ENCODE measurements at regions of chr2 and their contacts with region 1.

Region 1: DNA sequence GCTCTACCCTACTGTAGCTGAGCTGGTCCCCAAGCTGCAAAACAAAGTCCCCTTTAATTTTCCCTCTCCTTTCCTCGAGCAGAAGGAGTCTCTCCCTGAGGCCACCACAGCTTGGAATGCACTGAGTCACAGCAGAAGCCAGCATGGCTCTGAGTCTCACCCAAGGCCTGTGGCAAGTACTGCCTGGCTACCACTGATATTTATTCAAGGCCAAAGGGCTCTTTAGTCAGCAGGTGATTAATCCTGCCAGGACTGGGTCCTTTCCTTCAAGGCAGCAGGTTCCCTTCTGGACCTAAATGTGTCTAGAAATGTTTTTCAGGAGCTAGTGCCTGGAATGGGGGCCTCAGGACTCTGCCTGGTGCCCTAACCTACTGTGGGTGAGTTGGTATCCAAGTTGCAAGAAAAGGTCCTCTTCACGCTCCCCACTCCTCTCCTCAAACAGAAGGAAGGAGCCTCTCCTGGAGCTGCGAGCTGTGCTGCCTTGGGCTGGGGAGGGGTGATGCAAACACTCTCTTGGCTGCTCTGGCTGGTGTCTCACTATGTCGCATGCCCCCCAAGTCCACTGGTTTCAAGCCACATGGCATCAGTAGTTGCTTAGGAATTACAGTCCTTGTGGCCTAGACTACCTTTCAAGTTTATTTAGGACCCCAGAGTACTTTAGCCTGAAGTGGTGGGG is 53.4 kb downstream of the CD28 start:
- DNase-seq: no peak
- H3K4me3 Mint-ChIP-seq: no peak overlapping the region
- H3K27ac Mint-ChIP-seq: no peak overlapping the region
- H3K4me1 Mint-ChIP-seq: peaks cover 59% of the 10 kb centered on the region
- H3K27me3 Mint-ChIP-seq: no peaks in the 10 kb centered on the region

Region 2: DNA sequence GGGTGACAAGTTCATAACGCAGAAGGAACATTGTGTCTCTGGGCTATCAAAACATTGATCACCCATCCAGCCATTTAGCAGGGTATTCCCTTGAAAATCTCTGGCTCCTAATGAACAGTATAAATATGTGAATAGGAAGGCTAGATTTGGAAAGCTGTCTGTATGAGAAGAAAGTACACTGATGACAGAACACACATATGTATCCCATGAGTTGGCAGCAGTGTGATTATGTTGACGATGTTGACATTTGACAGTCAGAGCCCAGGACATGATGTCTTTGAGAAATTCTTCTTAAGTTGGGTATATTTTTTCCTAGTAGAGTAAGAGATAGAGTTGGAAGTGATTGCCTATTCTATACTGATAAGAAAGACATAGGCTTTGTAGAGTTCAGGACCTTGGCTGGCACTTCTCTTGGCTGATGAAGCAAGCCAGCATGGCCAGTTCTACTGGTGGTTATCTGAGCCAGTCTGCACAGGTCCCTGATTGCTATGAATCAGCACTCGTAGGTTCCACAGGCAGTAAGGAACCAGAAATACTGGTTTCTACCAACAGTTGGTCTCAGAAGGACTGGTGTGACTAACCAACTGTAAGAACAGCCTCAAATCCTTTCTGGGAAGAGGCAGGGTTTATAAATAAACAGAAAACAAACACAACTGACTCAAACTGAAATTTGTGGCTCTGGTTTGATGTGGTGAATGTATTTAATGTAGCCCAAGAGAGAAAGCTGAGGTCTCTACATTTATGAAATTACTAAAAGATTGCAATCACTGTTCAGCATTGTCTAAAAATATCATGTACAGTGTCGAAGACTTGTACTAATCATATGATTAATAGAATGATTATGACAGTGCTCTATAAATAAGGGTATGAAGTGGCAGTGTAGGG is 180.8 kb before region 1 on chr2:
- CTCF ChIA-PET with region 1: no interaction called
- intact Hi-C with region 1: loop called (anchors 1 kb)
- DNase-seq: peak; percentile 54
- H3K4me3 Mint-ChIP-seq: no peak overlapping the region
- H3K27ac Mint-ChIP-seq: no peak overlapping the region
- H3K4me1 Mint-ChIP-seq: peaks cover 14% of the 10 kb centered on the region
- H3K27me3 Mint-ChIP-seq: no peaks in the 10 kb centered on the region

Region 3: GRCh38 chr2:203599509-203599908 is 160.3 kb before region 1 on chr2:
- CTCF ChIA-PET with region 1: no interaction called
- intact Hi-C with region 1: no loop called
- DNase-seq: no peak
- H3K4me3 Mint-ChIP-seq: no peak overlapping the region
- H3K27ac Mint-ChIP-seq: no peak overlapping the region
- H3K4me1 Mint-ChIP-seq: peaks cover 7% of the 10 kb centered on the region
- H3K27me3 Mint-ChIP-seq: no peaks in the 10 kb centered on the region

Region 4: GRCh38 chr2:203740780-203741281 is 19.0 kb before region 1 on chr2:
- CTCF ChIA-PET with region 1: interaction called, 8 read pairs
- intact Hi-C with region 1: loop called (anchors 1 kb)
- DNase-seq: peak; percentile 69
- H3K4me3 Mint-ChIP-seq: peak overlapping the region; percentile 54
- H3K27ac Mint-ChIP-seq: peak overlapping the region; percentile 97
- H3K4me1 Mint-ChIP-seq: peaks cover 88% of the 10 kb centered on the region
- H3K27me3 Mint-ChIP-seq: no peaks in the 10 kb centered on the region

Region 5: DNA sequence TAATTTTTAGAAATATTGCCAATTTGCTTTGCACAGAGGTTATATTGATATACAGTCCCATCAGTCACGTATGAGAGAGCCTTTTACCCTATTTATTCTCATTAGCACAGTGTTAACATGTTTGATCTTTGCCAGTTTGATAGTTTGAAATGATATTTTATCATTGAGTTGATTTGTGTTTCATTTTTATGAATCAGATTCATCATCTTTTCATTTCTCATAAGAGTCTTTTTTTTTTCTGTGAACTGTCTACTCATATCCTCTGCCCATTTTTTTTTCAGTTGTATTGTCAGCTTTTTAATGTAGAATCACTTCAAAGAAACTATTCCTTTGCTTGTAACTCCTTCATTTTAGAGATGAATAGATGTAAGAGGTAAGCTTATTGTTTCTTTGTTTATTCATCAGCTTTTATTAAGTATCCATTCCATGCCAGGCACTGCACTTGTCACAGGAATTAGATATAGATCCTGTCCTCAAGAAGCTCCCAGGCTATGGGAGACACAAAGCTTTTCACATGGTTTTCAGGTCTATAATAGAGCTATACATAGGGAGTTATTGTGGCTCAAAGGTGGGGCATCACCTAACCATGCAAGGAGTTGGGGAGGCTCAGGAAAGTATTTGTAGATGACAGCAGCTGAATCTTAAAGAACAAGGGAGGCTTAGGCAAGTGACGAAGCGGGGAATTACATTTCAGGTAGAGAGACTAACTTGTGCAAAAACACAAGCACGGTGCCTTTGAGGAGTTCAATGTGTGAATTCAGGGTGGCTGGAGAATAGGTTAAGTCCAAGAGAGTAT is 11.3 kb before region 1 on chr2:
- CTCF ChIA-PET with region 1: interaction called, 12 read pairs
- intact Hi-C with region 1: loop called (anchors 1 kb)
- DNase-seq: peak; percentile 67
- H3K4me3 Mint-ChIP-seq: peak overlapping the region; percentile 32
- H3K27ac Mint-ChIP-seq: peak overlapping the region; percentile 89
- H3K4me1 Mint-ChIP-seq: peaks cover 79% of the 10 kb centered on the region
- H3K27me3 Mint-ChIP-seq: no peaks in the 10 kb centered on the region

Region 6: DNA sequence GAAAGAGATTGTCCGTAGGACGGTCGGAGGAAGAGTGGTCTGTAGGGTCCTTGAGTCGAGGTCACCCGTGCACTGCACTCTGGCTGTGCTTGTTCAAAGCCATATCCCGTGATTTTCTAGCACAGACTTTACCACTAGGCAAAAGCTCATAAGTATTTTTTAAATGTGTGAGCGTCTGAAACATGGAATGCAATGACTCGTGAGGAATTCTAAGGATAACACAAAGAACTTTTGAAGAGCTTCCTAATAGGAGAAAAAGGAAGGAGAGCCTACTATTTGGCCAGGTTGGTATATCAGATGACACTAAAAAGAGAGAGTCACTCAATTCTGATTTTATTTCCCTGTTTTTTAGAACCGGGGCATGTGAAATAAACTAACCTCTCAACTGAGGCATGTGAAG is 14.9 kb after region 1 on chr2:
- CTCF ChIA-PET with region 1: no interaction called
- intact Hi-C with region 1: no loop called
- DNase-seq: no peak
- H3K4me3 Mint-ChIP-seq: no peak overlapping the region
- H3K27ac Mint-ChIP-seq: no peak overlapping the region
- H3K4me1 Mint-ChIP-seq: peaks cover 25% of the 10 kb centered on the region
- H3K27me3 Mint-ChIP-seq: no peaks in the 10 kb centered on the region

Region 7: DNA sequence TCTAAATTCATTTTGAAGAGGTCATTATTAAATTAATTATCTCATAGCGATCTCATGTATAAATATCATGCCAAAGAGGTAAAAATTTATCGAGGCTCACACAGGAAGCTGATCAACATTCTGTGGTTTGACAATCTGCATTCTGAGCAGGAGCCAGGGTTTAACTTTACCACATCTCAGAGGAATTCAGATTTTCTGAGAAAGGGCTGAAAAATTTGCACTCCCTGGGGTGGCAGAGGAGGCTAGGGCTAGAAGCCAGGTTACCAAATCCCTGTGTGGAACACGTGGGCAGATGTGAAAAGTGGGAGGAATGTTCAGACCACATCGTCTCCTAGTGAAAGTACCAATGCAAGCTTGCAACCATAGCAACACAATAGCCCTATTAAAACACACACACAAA is 44.2 kb after region 1 on chr2:
- CTCF ChIA-PET with region 1: no interaction called
- intact Hi-C with region 1: loop called (anchors 2 kb)
- DNase-seq: peak; percentile 55
- H3K4me3 Mint-ChIP-seq: no peak overlapping the region
- H3K27ac Mint-ChIP-seq: peak overlapping the region; percentile 27
- H3K4me1 Mint-ChIP-seq: peaks cover 75% of the 10 kb centered on the region
- H3K27me3 Mint-ChIP-seq: no peaks in the 10 kb centered on the region

Measured in activated naive CD4-positive, alpha-beta T cell treated with anti-CD3 and anti-CD28 coated beads for 36 hours (primary cell).